ENCODE measurements at regions of chr10 and their contacts with region 1.

Region 1: DNA sequence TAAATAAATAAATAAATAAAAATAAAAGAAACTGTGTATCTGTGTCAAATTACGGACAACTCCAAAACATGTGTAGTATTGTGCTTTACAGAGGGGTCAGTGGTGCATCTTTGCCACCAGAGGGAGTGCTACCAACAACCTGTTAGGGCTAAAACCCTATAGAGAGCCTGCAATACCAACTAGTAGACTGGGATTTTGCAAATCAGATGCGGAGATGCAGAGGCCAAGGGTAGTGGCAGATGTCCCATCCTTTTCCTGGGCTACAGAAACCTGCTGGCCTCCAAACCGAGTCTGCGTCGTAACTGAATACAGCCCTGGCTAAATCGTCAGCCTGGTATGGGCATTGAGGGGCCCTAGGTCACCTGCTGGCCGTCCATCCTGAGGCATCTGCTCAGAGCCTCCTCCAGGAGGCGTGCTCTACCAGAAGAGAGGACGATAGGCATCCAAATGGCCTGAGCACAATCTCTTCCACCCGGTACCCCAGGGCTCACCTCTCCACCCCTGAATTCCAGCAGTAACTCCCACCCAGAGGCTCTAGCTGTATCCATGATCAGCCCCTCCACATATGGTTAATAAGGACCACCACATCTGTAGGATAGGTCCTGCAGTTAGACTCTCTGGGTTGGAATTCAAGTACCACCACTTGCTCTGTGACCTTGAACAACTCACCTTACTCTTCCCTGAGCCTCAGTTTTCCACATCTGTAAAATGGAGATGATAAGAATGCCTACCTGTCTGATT is 6.2 kb upstream of the RRP12 start:
- DNase-seq: peak; percentile 71
- ATAC-seq: peak; percentile 97
- H3K4me3 ChIP-seq: peak overlapping the region; percentile 47; the same call in 1 of the 2 replicates
- H3K27ac ChIP-seq: no peak overlapping the region
- H3K4me1 ChIP-seq: peaks cover 17% of the 10 kb centered on the region
- H3K27me3 ChIP-seq: no peaks in the 10 kb centered on the region
- CTCF ChIP-seq: peak; percentile 76

Region 2: DNA sequence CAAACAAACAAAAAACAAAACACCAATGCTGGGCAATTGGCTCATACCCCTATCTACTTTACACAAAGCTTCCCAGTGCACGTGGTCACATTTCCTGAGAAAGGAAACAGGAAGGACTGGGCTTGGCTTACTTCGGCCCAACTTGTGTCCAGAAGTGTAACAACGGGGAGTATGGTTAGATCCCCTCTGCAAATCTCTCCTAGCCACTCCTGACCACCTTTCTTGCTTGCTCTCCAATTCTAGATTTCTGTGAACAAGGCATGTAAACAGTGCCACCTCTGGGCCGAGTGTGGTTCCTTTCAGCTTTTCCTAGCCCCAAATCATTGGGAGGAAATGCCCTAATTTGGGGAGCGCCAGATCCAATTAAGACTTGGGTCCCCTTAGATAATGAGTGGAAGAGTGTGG is 51.8 kb before region 1 on chr10:
- CTCF ChIA-PET with region 1: no interaction called
- POLR2A ChIA-PET with region 1: no interaction called
- intact Hi-C with region 1: no loop called
- DNase-seq: no peak
- ATAC-seq: peak; percentile 13; the same call in 1 of the 2 replicates
- H3K4me3 ChIP-seq: no peak overlapping the region
- H3K27ac ChIP-seq: no peak overlapping the region
- H3K4me1 ChIP-seq: no peaks in the 10 kb centered on the region
- H3K27me3 ChIP-seq: no peaks in the 10 kb centered on the region
- CTCF ChIP-seq: peak; percentile 46

Region 3: DNA sequence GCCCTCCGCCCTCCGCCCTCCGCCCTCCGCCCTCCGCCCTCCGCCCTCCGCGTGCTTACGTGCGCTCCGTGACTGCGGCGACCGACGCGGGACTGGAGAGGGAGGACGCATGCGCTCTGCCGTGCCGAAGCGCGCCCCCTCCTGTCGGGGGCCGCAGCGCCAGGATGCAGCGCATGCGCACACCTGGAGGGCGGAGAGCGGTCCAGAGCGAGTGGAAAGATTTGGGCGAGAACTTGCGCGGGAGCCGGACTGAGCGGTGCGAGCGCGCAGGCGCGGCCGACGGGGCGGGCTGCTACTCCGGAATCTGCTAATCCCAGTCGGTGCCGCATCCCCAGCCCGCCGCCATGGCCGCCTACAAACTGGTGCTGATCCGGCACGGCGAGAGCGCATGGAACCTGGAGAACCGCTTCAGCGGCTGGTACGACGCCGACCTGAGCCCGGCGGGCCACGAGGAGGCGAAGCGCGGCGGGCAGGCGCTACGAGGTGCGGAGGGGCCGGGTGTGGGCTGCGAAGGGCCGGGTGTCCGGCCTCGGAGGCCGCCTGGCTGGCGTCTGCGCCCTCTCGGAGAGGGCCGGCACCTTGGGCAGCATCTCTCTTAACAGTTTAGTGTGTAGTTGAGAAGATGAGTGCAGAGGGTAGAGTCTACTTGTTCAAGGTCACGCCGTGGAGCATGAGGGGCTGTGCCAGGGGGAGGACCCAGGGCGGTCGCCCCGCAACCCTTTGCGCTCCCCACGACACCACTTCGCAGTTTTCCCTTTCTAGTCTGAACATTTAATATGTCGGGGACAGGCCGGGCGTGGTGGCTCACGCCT is 18.8 kb after region 1 on chr10 and contains the start of gene PGAM1:
- CTCF ChIA-PET with region 1: interaction called, 5 read pairs
- POLR2A ChIA-PET with region 1: interaction called, 3 read pairs
- intact Hi-C with region 1: loop called (anchors 2 kb)
- DNase-seq: peak; percentile 94
- ATAC-seq: peak; percentile 84
- H3K4me3 ChIP-seq: peak within 1 kb of the TSS; percentile 96
- H3K27ac ChIP-seq: peak within 1 kb of the TSS; percentile 33
- H3K4me1 ChIP-seq: peaks cover 15% of the 10 kb centered on the region
- H3K27me3 ChIP-seq: no peaks in the 10 kb centered on the region
- CTCF ChIP-seq: peak; percentile 50
- total RNA-seq, gene PGAM1: 591 and 661 TPM in 2 replicates

Region 4: GRCh38 chr10:97468162-97468561 is 60.8 kb after region 1 on chr10:
- CTCF ChIA-PET with region 1: no interaction called
- POLR2A ChIA-PET with region 1: no interaction called
- intact Hi-C with region 1: no loop called
- DNase-seq: no peak
- ATAC-seq: no peak
- H3K4me3 ChIP-seq: no peak overlapping the region
- H3K27ac ChIP-seq: no peak overlapping the region
- H3K4me1 ChIP-seq: peaks cover 11% of the 10 kb centered on the region
- H3K27me3 ChIP-seq: no peaks in the 10 kb centered on the region
- CTCF ChIP-seq: no peak